ENCODE measurements at regions of chr6 and their contacts with region 1.

Region 1: GRCh38 chr6:27772261-27773001 is 139.8 kb downstream of the OR2B2 start:
- DNase-seq: peak; percentile 83
- H3K4me3 ChIP-seq: no peak overlapping the region; a peak in 1 of 4 replicates
- H3K27ac ChIP-seq: no peak overlapping the region
- H3K4me1 ChIP-seq: peaks cover 0 to 3% of the 10 kb centered on the region in 2 experiments; a peak in 1 of 4 replicates
- H3K27me3 ChIP-seq: no peaks in the 10 kb centered on the region
- CTCF ChIP-seq: peak; percentile 88
- EP300 ChIP-seq: no peak
- RAD21 ChIP-seq: peak; percentile 67

Region 2: DNA sequence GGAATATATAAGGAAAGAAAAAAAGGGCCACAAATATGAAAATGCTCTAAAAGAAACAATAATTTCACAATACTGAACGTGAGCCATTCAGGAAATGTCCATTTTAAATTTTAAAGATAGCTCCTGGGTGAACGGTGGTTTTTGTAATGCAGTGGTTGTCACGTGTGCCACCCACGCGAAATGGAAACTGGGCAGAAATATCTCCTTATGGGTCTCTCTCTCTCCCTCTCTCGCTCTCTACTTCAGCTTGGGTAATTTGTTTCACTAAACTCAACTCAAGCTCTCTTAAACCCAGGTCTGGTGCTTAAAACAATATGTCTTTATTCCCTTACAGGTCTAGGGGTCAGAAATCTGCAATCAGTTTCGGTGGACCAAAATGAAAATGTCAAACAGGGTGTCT is 11.0 kb before region 1 on chr6:
- CTCF ChIA-PET with region 1: interaction called, 41 read pairs
- POLR2A ChIA-PET with region 1: no interaction called
- DNase-seq: no peak
- H3K4me3 ChIP-seq: no peak overlapping the region
- H3K27ac ChIP-seq: no peak overlapping the region
- H3K4me1 ChIP-seq: no peaks in the 10 kb centered on the region; a peak in 1 of 4 replicates
- H3K27me3 ChIP-seq: no peaks in the 10 kb centered on the region; the same call in 1 of the 2 replicates
- CTCF ChIP-seq: no peak
- EP300 ChIP-seq: no peak
- RAD21 ChIP-seq: no peak

Region 3: GRCh38 chr6:27785294-27785693 is 12.9 kb after region 1 on chr6:
- CTCF ChIA-PET with region 1: interaction called, 65 read pairs
- POLR2A ChIA-PET with region 1: no interaction called
- DNase-seq: no peak
- H3K4me3 ChIP-seq: no peak overlapping the region
- H3K27ac ChIP-seq: no peak overlapping the region
- H3K4me1 ChIP-seq: no peaks in the 10 kb centered on the region
- H3K27me3 ChIP-seq: no peaks in the 10 kb centered on the region; the same call in 1 of the 2 replicates
- CTCF ChIP-seq: no peak
- EP300 ChIP-seq: no peak
- RAD21 ChIP-seq: no peak

Measured in SK-N-SH (cell line).